ENCODE measurements at regions of chr11 and their contacts with region 1.

Region 1: DNA sequence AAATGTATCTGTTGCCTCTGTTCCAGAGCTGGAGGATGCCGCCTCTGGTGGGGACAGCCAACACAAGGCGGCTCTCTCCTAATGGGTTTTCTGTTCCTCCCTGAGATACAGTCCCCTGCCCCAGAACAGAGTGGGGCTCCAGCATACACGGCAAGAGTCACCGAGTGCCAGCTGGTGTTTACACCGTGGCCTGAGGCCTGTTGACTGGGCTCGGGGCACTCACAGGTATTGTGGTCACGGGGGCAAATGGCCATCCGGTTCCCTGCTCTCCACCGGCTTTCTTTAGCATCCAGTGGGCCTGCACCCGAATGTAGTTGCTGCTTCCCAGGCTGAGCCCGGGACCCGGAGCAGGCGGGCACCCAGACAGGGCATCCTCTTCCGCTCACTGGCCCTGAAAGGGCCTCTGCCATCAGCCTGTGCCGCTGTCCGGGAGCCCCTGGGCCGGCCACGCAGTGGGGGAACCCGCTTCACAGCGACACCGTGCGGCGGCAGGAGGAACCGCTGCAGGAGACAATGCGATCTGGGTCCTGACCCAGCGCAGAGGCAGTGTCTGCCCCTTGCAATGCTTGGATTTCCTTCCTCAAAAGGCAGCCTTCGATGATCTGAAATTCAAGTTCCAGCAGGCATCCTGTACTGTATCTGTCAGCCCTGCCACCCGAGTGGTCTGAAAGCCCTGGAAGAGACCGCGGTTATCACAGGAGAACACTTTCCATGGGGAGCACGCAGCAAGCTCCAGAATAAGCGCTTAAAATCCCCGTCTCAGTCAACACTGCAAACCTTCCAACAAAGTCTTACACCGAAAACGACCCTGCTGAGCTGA is 859 bp upstream of the KRTAP5-5 start:
- DNase-seq: peak; percentile 63
- ATAC-seq: peak; percentile 99
- H3K4me3 Mint-ChIP-seq: no peak overlapping the region
- H3K27ac Mint-ChIP-seq: no peak overlapping the region
- H3K4me1 Mint-ChIP-seq: no peaks in the 10 kb centered on the region
- H3K27me3 Mint-ChIP-seq: peaks cover 14% of the 10 kb centered on the region
- CTCF ChIP-seq: peak; percentile 97

Region 2: DNA sequence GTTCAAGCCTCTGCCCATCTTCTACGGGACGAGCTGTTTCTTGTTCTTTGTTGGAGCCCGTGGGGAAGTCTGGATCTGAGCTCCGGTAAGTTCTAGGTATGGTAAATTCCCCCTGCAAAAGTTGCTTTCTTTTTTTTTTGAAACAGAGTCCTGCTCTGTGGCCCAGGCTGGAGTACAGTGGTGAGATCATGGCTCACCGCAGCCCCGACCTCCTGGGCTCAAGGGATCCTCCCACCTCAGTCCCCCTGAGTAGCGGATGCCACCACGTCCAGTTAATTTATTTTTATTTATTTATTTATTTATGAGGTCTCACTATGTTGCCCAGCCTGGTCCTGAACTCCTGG is 106.7 kb before region 1 on chr11:
- CTCF ChIA-PET with region 1: no interaction called
- POLR2A ChIA-PET with region 1: no interaction called
- intact Hi-C with region 1: no loop called
- DNase-seq: no peak
- ATAC-seq: no peak
- H3K4me3 Mint-ChIP-seq: no peak overlapping the region
- H3K27ac Mint-ChIP-seq: no peak overlapping the region
- H3K4me1 Mint-ChIP-seq: peaks cover 45% of the 10 kb centered on the region
- H3K27me3 Mint-ChIP-seq: no peaks in the 10 kb centered on the region
- CTCF ChIP-seq: no peak

Region 3: DNA sequence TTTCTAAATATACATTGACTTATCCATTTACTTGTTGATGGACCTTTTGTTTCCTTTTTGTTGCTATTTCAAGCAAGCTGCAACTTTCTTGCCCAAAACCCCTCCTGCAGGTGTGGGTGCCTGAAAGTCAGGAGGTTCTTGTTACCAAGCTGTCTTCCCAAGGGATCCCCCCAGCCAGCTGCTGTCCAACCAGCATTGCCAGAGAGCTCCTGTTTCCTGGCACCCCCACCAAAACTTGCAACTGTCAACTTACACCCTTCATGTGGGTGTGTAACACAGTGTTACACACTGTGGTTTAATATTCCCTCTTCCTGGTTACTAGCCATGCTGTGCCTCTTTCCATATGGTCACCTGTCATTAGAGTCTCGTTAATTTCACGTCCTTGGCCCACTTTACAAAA is 42.0 kb before region 1 on chr11:
- CTCF ChIA-PET with region 1: no interaction called
- POLR2A ChIA-PET with region 1: no interaction called
- intact Hi-C with region 1: no loop called
- DNase-seq: no peak
- ATAC-seq: no peak
- H3K4me3 Mint-ChIP-seq: no peak overlapping the region
- H3K27ac Mint-ChIP-seq: no peak overlapping the region
- H3K4me1 Mint-ChIP-seq: peaks cover 20% of the 10 kb centered on the region
- H3K27me3 Mint-ChIP-seq: peaks cover 10% of the 10 kb centered on the region
- CTCF ChIP-seq: no peak

Region 4: DNA sequence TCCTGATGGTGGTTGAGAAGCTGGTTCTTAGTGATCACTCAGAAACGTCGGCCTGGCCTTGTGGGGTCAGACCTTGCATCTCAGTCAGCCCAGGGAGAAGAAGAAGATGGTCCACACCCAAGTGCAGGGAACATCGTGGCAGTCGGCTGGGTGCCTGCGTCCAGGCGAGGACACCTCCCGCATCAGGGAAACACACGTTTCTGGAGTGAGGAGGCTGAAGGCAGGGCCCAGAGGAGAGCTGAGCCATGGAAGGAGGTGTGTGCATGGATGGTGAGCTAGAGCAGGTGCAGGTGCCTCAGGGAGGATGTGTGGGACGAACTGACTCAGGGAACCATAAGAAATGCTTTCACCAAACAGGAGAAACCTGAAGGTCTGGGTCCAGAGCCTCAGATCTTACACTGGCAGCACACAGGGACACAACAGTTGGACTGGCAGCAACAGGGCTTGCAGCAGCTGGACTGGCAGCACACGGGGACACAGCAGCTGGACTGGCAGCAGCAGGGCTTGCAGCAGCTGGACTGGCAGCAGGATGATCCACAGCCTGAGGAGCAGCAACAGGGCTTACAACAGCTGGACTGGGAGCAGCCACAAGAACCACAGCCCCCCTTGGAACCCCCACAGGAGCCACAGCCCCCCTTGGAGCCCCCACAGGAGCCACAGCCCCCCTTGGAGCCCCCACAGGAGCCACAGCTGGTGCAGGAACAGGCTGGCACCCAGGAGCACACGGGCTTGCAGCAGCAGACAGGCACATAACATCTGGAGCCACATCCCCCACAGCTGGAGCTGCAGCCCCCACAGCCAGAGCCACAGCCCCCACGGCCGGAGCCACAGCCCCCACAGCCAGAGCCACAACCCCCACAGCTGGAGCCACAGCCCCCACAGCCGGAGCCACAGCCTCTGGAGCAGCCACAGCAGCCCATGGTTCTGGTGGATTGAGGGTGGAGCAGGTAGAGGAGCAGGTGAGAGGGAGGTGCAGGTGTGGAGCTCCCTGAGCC is 31.1 kb before region 1 on chr11 and contains the start of gene KRTAP5-2:
- CTCF ChIA-PET with region 1: interaction called, 18 read pairs
- POLR2A ChIA-PET with region 1: no interaction called
- intact Hi-C with region 1: no loop called
- DNase-seq: no peak
- ATAC-seq: no peak
- H3K4me3 Mint-ChIP-seq: no peak within 1 kb of the TSS
- H3K27ac Mint-ChIP-seq: no peak within 1 kb of the TSS
- H3K4me1 Mint-ChIP-seq: no peaks in the 10 kb centered on the region
- H3K27me3 Mint-ChIP-seq: peaks cover 47% of the 10 kb centered on the region
- CTCF ChIP-seq: no peak
- total RNA-seq, gene KRTAP5-2: not detected

Region 5: DNA sequence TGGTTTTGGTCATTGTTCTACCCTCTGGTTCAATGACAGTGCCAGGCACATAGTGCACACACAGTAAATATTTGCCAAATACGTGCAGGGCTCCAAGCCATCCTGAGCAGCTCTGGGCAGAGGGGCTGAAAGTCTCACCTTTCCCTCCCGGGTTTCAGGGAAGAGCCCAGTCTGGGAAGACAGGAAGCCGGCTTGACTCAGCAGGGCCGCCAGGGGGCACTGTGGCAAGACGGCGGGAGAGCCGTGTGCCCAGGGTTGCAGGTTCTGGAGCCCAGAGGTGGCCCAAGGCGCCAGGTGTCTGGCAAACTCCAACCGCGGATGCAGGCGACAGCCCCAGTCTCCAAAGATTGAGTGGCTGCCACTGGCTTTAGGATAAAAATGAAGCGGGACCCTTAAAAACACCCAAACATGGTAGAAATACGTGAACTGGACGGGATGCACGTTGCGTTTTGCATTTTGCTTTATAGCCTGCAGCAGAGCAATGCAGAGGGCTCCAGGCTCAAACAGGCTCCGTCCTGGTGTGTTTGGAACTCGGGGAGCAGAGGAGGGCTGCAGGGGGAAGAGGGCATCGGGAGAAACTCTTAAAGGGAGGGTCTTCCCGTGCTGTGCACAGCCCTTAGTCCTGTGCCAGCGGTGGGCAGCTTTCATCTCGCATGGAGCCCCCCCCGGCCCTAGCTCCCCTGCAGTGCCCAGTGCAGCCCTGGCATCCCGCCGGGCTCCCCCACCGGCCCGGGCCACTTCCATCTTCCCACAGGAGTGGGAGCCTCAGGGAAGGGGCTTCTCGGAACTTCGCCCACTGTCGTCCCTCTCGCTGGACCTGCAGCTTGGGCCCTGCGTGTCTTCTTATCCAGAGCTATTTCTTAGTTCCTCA is 11.6 kb after region 1 on chr11:
- CTCF ChIA-PET with region 1: interaction called, 28 read pairs
- POLR2A ChIA-PET with region 1: no interaction called
- intact Hi-C with region 1: no loop called
- DNase-seq: peak; percentile 26
- ATAC-seq: peak; percentile 42
- H3K4me3 Mint-ChIP-seq: no peak overlapping the region
- H3K27ac Mint-ChIP-seq: no peak overlapping the region
- H3K4me1 Mint-ChIP-seq: no peaks in the 10 kb centered on the region
- H3K27me3 Mint-ChIP-seq: peaks cover 9% of the 10 kb centered on the region
- CTCF ChIP-seq: peak; percentile 95